ENCODE measurements at regions of chr16 and their contacts with region 1.

Region 1: DNA sequence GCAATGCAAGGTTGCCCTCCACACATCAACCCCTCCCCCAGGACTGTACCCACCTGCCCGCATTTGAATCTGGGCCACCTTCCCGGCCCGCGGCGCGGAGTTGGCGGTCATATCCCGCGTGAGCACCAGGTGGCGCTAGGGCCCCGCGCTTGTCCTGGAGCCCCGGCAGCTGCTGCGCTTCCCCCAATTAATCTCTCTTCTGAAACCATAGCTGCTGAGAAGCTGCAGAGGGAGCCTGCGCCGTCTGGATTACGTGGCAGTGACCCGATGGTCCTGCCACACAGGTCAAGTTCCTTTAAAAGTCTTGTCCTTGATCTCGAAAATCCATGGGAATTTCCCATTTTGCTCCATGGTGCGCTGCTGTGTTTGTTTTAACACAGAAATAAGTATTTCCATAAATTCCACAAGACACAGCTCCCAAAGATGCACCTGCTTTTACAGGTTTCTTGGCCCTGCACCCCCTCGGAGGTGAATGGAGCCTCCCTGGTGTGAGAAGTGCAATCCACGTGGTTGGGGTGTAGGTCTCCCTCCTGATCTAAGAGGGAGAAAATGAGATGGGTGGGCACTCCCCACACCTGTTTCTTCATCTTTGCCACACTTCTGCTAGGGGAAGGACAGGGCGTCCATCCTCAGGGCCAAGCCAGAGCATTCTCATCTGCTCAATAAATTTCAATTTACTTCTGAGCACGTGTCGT is 22.1 kb downstream of the COX4I1 start:
- DNase-seq: peak; percentile 88
- ATAC-seq: peak; percentile 91

Region 2: DNA sequence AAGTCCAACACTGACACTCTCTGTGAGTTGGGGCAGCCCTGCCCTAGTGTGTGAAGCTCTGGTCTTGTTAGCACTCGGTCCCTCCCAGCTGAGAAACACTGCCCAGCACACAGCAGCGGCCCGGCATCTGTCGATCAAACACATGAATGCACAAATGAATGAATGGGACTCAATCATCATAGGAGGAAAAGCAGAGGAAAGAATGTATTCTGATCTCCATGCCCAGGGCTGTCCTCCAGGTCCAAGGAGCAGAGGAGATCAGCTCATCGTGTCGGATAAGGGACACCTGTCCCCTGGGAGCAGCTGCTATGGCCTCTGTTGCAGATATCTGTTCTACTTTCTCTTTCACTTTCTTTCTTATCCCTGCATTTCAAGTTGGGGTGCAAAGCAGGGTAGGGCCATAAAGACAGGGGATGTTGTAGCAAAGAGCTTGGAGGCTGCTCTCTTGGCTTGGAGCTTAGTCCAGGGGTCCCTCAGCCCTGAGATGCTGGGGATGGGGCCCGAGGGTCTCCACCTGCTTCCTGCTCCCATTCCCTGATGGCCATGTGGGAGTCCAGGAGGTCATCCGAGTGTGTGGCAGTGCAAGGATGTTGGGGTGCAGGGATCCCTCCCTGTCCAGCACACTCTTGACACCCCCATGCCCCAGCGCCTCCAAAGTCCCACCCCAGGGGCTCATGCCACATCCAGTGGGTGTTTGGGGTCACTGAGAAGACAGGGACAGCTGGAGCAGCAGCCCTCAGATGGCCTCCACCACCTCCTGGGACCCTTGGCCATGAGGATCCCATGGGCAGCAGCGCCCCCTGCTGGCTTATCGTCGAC is 165.6 kb after region 1 on chr16:
- intact Hi-C with region 1: loop called (anchors 10 kb)
- DNase-seq: peak; percentile 53
- ATAC-seq: peak; percentile 42

Region 3: GRCh38 chr16:86015606-86016005 is 194.0 kb after region 1 on chr16:
- intact Hi-C with region 1: loop called (anchors 2 kb)
- DNase-seq: no peak
- ATAC-seq: no peak

Region 4: DNA sequence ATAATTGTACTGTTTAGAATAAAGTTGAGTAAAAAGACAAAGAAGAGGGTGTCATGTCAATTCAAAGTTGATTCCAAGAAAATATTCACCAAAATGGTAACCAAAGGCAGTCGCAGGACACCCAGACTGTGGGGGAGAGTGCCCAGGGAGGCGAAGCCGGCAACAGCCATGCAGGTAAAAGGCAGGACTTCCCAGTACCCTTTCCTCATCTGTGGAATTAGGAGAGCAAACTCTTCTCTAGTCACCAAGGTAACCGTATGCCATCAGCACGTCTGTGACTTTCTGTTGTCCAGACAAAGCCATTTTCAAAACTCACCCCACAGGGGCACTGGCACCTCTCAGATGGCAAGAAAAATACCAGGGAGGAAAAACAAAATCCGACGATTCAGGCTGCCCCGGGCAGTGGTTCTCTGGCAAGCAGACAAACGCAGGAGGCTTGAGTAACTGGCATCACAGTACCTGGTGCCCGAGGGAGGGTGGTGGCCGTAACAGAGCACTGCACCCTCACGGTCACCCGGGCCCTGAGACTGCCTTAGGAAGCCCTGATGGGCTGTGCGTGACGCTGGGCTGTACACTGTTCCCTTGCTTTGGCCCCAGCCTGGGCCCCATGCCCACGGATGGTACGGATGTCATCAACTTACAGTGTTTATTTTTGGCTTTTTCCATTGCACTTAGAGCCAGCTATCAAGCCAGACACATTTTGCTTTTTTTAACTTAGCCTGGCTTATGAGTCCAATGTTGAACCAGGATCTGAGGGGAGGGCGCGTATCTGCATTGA is 1044.1 kb after region 1 on chr16:
- intact Hi-C with region 1: no loop called
- DNase-seq: peak; percentile 94
- ATAC-seq: peak; percentile 97

Measured in left ventricle myocardium superior (tissue), 1 donor.